ENCODE measurements at regions of chr3 and their contacts with region 1.

Region 1: GRCh38 chr3:190183121-190183520 is 62.4 kb upstream of the P3H2 start:
- DNase-seq: no peak
- H3K4me3 ChIP-seq: no peak overlapping the region
- H3K27ac ChIP-seq: no peak overlapping the region
- H3K4me1 ChIP-seq: no peaks in the 10 kb centered on the region
- H3K27me3 ChIP-seq: no peaks in the 10 kb centered on the region
- CTCF ChIP-seq: no peak
- POLR2A ChIP-seq: no peak

Region 2: GRCh38 chr3:190125436-190126068 is 57.6 kb before region 1 on chr3:
- intact Hi-C with region 1: loop called in 1 of 2 experiments (anchors 5 kb)
- DNase-seq: no peak
- H3K4me3 ChIP-seq: no peak overlapping the region
- H3K27ac ChIP-seq: no peak overlapping the region
- H3K4me1 ChIP-seq: peaks cover 4 to 17% of the 10 kb centered on the region in 2 donors
- H3K27me3 ChIP-seq: no peaks in the 10 kb centered on the region
- CTCF ChIP-seq: no peak
- POLR2A ChIP-seq: no peak

Region 3: GRCh38 chr3:190596349-190597285 is 413.5 kb after region 1 on chr3:
- intact Hi-C with region 1: no loop called
- DNase-seq: no peak
- H3K4me3 ChIP-seq: no peak overlapping the region
- H3K27ac ChIP-seq: no peak overlapping the region
- H3K4me1 ChIP-seq: no peaks in the 10 kb centered on the region
- H3K27me3 ChIP-seq: no peaks in the 10 kb centered on the region
- CTCF ChIP-seq: no peak
- POLR2A ChIP-seq: no peak